SK-N-SH (cell line): ENCODE measurements at regions of chr1 and their contacts with region 1.

Region 1: DNA sequence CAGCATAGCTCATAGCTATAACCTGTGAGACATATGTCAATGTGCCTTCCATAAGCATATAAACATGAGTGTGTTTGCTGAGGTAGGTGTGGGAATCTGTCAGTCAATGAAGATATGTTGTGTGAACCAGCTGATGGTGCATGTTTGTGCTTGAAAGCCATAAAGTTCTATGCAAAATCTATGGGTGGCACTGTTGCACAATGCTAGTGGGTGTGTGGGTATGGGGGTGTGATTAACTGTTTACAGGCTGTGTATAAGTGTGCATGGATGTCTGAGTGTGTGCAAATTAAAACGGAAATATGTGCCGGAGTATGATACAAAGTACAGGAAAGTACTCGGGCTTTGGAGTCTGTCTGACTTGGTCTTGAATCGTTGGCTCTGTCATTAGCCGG is 1.0 kb upstream of the ATP2B4 start:
- DNase-seq: peak; percentile 66
- H3K4me3 ChIP-seq: no peak overlapping the region
- H3K27ac ChIP-seq: peak overlapping the region; percentile 86 to 91; a peak in 3 of 4 replicates
- H3K4me1 ChIP-seq: peaks cover 25 to 28% of the 10 kb centered on the region in 2 experiments; a peak in 3 of 4 replicates
- H3K27me3 ChIP-seq: no peaks in the 10 kb centered on the region
- CTCF ChIP-seq: peak; percentile 55
- EP300 ChIP-seq: no peak
- RAD21 ChIP-seq: peak; percentile 90

Region 2: GRCh38 chr1:203381151-203381751 is 244.4 kb before region 1 on chr1:
- CTCF ChIA-PET with region 1: no interaction called
- POLR2A ChIA-PET with region 1: no interaction called
- DNase-seq: no peak
- H3K4me3 ChIP-seq: no peak overlapping the region
- H3K27ac ChIP-seq: no peak overlapping the region
- H3K4me1 ChIP-seq: peaks cover 0 to 3% of the 10 kb centered on the region in 2 experiments; a peak in 1 of 4 replicates
- H3K27me3 ChIP-seq: peaks cover 20% of the 10 kb centered on the region; the same call in 1 of the 2 replicates
- CTCF ChIP-seq: no peak
- EP300 ChIP-seq: no peak
- RAD21 ChIP-seq: no peak

Region 3: GRCh38 chr1:203395751-203396150 is 229.9 kb before region 1 on chr1:
- CTCF ChIA-PET with region 1: no interaction called
- POLR2A ChIA-PET with region 1: no interaction called
- DNase-seq: no peak
- H3K4me3 ChIP-seq: no peak overlapping the region
- H3K27ac ChIP-seq: no peak overlapping the region
- H3K4me1 ChIP-seq: no peaks in the 10 kb centered on the region
- H3K27me3 ChIP-seq: peaks cover 9% of the 10 kb centered on the region; the same call in 1 of the 2 replicates
- CTCF ChIP-seq: no peak
- EP300 ChIP-seq: no peak
- RAD21 ChIP-seq: no peak

Region 4: GRCh38 chr1:203711251-203712007 is 85.8 kb after region 1 on chr1:
- CTCF ChIA-PET with region 1: interaction called, 13 read pairs
- POLR2A ChIA-PET with region 1: no interaction called
- DNase-seq: no peak
- H3K4me3 ChIP-seq: no peak overlapping the region
- H3K27ac ChIP-seq: no peak overlapping the region
- H3K4me1 ChIP-seq: no peaks in the 10 kb centered on the region
- H3K27me3 ChIP-seq: no peaks in the 10 kb centered on the region
- CTCF ChIP-seq: no peak
- EP300 ChIP-seq: no peak
- RAD21 ChIP-seq: no peak